CD14-positive monocyte (primary cell): ENCODE measurements at regions of chr9 and their contacts with region 1.

Region 1: DNA sequence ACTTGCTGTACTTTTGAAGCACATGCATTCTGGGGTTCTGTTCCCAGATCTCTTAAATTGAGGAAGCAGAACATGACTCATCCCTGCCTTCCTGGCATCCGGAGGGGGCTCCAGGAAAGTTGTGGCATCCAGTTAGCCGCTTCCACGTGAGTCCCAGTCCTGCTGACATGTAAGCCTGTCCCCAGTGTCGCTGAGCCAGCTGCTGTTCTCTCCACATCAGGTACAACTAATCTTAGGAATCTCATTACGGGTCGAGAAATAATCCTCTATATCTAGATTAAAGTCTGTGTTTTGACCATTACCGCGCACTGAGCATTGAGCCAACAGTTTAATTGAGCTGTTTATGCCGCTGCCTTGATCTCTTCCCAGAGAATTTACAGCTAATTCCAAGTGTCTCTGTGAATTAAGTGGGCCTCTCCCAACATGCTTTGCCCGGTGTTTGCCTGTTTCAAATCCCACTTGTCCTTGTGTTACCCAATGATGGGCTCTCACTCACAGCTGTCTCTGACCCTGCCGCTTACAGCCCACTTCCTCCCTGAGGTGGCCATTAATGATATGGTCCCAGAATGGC is 10.5 kb upstream of the SHB start:
- DNase-seq: peak in 2 of 3 donors; percentile 66 to 86
- H3K4me3 ChIP-seq: no peak overlapping the region
- H3K4me3 Mint-ChIP-seq: peak overlapping the region in 1 of 2 donors; percentile 14
- H3K27ac ChIP-seq: no peak overlapping the region
- H3K27ac Mint-ChIP-seq: peak overlapping the region in 2 of 7 donors; percentile 16 to 75
- H3K4me1 ChIP-seq: peaks cover 53 to 58% of the 10 kb centered on the region in 2 donors
- H3K4me1 Mint-ChIP-seq: peaks cover 48% of the 10 kb centered on the region
- H3K27me3 ChIP-seq: no peaks in the 10 kb centered on the region
- H3K27me3 Mint-ChIP-seq: peaks cover 0 to 2% (median 2%) of the 10 kb centered on the region in 3 donors
- CTCF ChIP-seq: no peak

Region 2: GRCh38 chr9:37283730-37284325 is 795.7 kb before region 1 on chr9:
- intact Hi-C with region 1: no loop called
- DNase-seq: no peak
- H3K4me3 ChIP-seq: no peak overlapping the region
- H3K4me3 Mint-ChIP-seq: no peak overlapping the region
- H3K27ac ChIP-seq: no peak overlapping the region
- H3K27ac Mint-ChIP-seq: no peak overlapping the region
- H3K4me1 ChIP-seq: no peaks in the 10 kb centered on the region
- H3K4me1 Mint-ChIP-seq: no peaks in the 10 kb centered on the region
- H3K27me3 ChIP-seq: no peaks in the 10 kb centered on the region
- H3K27me3 Mint-ChIP-seq: no peaks in the 10 kb centered on the region
- CTCF ChIP-seq: no peak

Region 3: DNA sequence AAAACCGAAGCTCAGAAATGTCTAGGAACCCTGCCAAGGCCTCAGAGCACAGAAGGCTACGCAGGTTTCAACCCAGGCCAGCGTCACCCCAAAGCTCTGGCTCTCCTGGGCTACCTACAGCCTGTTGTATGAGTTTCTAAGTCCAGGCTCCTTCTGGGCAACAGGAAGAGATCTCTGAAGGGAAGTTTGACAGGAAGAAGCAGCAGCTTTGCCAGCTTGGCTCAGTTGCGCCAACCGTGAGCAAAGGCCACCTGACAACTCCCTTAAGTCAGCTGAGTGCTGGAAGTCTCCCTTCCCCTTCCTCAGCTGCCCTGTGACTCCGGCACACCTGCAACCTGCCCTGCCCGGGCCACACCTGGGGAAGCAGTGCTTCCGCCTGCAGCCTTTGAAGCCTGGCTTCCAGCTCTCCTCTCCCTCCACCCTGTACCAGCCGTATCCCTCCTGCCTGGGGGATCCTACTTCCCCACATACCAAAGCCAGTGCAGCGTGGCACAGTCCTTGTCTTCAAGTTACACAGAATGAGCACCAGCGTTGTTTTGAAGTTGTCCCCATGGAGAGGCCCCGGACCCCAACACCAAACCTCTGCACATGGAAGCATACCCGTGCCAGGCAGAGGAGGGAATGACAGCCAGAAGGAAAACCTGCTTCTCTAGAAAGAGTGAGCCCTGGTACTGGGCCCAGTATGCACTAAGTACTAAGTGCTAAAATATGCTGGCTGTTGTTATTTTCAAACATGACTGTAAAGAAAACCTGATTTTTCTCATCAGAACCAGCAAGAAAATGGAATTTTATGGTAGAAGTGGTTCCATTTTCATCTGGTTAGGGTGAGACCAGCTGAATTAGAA is 47.1 kb before region 1 on chr9:
- intact Hi-C with region 1: loop called in 1 of 2 experiments (anchors 5 kb)
- DNase-seq: peak in 2 of 3 donors; percentile 6 to 25
- H3K4me3 ChIP-seq: no peak overlapping the region
- H3K4me3 Mint-ChIP-seq: no peak overlapping the region
- H3K27ac ChIP-seq: no peak overlapping the region
- H3K27ac Mint-ChIP-seq: peak overlapping the region in 2 of 7 donors; percentile 69 to 79
- H3K4me1 ChIP-seq: peaks cover 10 to 17% of the 10 kb centered on the region in 2 donors
- H3K4me1 Mint-ChIP-seq: peaks cover 21% of the 10 kb centered on the region
- H3K27me3 ChIP-seq: no peaks in the 10 kb centered on the region
- H3K27me3 Mint-ChIP-seq: peaks cover 0 to 10% (median 0%) of the 10 kb centered on the region in 3 donors
- CTCF ChIP-seq: no peak

Region 4: GRCh38 chr9:38243993-38244392 is 164.4 kb after region 1 on chr9:
- intact Hi-C with region 1: no loop called
- DNase-seq: no peak
- H3K4me3 ChIP-seq: no peak overlapping the region
- H3K4me3 Mint-ChIP-seq: no peak overlapping the region
- H3K27ac ChIP-seq: no peak overlapping the region
- H3K27ac Mint-ChIP-seq: peak overlapping the region in 1 of 7 donors; percentile 41
- H3K4me1 ChIP-seq: no peaks in the 10 kb centered on the region
- H3K4me1 Mint-ChIP-seq: no peaks in the 10 kb centered on the region
- H3K27me3 ChIP-seq: no peaks in the 10 kb centered on the region
- H3K27me3 Mint-ChIP-seq: peaks cover 0 to 7% (median 2%) of the 10 kb centered on the region in 3 donors
- CTCF ChIP-seq: no peak

Region 5: DNA sequence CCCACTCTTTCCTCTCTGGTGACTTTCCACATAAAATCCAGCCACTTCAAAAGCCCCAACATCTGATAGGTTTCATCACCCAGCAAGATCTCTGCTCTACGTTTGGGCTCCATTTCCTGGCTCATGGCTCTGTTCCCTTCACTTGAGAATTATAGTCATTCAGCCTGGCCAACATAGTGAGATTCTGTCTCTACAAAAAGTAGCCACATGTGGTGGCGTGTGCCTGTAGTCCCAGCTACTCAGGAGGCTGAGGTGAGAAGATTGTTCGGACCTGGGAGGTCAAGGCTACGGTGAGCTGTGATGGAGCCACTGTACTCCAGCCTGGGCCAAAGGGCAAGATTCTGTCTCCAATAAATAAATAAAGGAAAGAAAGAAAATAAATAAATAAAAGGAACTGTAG is 428.0 kb after region 1 on chr9:
- intact Hi-C with region 1: no loop called
- DNase-seq: no peak
- H3K4me3 ChIP-seq: no peak overlapping the region
- H3K4me3 Mint-ChIP-seq: no peak overlapping the region
- H3K27ac ChIP-seq: no peak overlapping the region
- H3K27ac Mint-ChIP-seq: peak overlapping the region in 1 of 7 donors; percentile 15
- H3K4me1 ChIP-seq: no peaks in the 10 kb centered on the region
- H3K4me1 Mint-ChIP-seq: no peaks in the 10 kb centered on the region
- H3K27me3 ChIP-seq: no peaks in the 10 kb centered on the region
- H3K27me3 Mint-ChIP-seq: peaks cover 3 to 7% (median 5%) of the 10 kb centered on the region in 3 donors
- CTCF ChIP-seq: no peak

Region 6: GRCh38 chr9:38518826-38519225 is 439.3 kb after region 1 on chr9:
- intact Hi-C with region 1: no loop called
- DNase-seq: no peak
- H3K4me3 ChIP-seq: no peak overlapping the region
- H3K4me3 Mint-ChIP-seq: no peak overlapping the region
- H3K27ac ChIP-seq: no peak overlapping the region
- H3K27ac Mint-ChIP-seq: no peak overlapping the region
- H3K4me1 ChIP-seq: no peaks in the 10 kb centered on the region
- H3K4me1 Mint-ChIP-seq: no peaks in the 10 kb centered on the region
- H3K27me3 ChIP-seq: no peaks in the 10 kb centered on the region
- H3K27me3 Mint-ChIP-seq: peaks cover 8 to 20% (median 16%) of the 10 kb centered on the region in 3 donors
- CTCF ChIP-seq: no peak